ENCODE measurements at regions of chr7 and their contacts with region 1.

Region 1: GRCh38 chr7:135281363-135281949 is 47.8 kb downstream of the STRA8 start:
- DNase-seq: peak; percentile 80 to 81
- ATAC-seq: peak; percentile 94
- H3K4me3 ChIP-seq: no peak overlapping the region
- H3K27ac ChIP-seq: no peak overlapping the region
- H3K4me1 ChIP-seq: no peaks in the 10 kb centered on the region
- H3K27me3 ChIP-seq: no peaks in the 10 kb centered on the region

Region 2: GRCh38 chr7:135320277-135320676 is 38.8 kb after region 1 on chr7:
- intact Hi-C with region 1: no loop called
- DNase-seq: peak; percentile 82 to 92
- ATAC-seq: no peak
- H3K4me3 ChIP-seq: no peak overlapping the region
- H3K27ac ChIP-seq: no peak overlapping the region
- H3K4me1 ChIP-seq: no peaks in the 10 kb centered on the region
- H3K27me3 ChIP-seq: no peaks in the 10 kb centered on the region

Region 3: GRCh38 chr7:135335628-135336139 is 54.2 kb after region 1 on chr7:
- intact Hi-C with region 1: loop called in 1 of 2 experiments (anchors 5 kb)
- DNase-seq: peak in 1 of 2 donors; percentile 52
- ATAC-seq: peak; percentile 33
- H3K4me3 ChIP-seq: no peak overlapping the region
- H3K27ac ChIP-seq: no peak overlapping the region
- H3K4me1 ChIP-seq: no peaks in the 10 kb centered on the region
- H3K27me3 ChIP-seq: no peaks in the 10 kb centered on the region

Region 4: GRCh38 chr7:135558337-135558767 is 276.9 kb after region 1 on chr7:
- intact Hi-C with region 1: loop called (anchors 1 to 5 kb)
- DNase-seq: peak in 1 of 2 donors; percentile 62
- ATAC-seq: peak; percentile 71
- H3K4me3 ChIP-seq: peak overlapping the region; percentile 64 to 70
- H3K27ac ChIP-seq: peak overlapping the region in 1 of 2 donors; percentile 98
- H3K4me1 ChIP-seq: no peaks in the 10 kb centered on the region
- H3K27me3 ChIP-seq: no peaks in the 10 kb centered on the region

Region 5: GRCh38 chr7:135645296-135645904 is 363.9 kb after region 1 on chr7:
- intact Hi-C with region 1: loop called (anchors 2 to 5 kb)
- DNase-seq: no peak
- ATAC-seq: peak; percentile 81
- H3K4me3 ChIP-seq: no peak overlapping the region
- H3K27ac ChIP-seq: no peak overlapping the region
- H3K4me1 ChIP-seq: no peaks in the 10 kb centered on the region
- H3K27me3 ChIP-seq: no peaks in the 10 kb centered on the region

Measured in aorta (tissue), 5 donors.